ENCODE measurements at regions of chr4 and their contacts with region 1.

Region 1: GRCh38 chr4:37793562-37793961 is 32.9 kb upstream of the PGM2 start:
- DNase-seq: no peak
- ATAC-seq: peak; percentile 76

Region 2: DNA sequence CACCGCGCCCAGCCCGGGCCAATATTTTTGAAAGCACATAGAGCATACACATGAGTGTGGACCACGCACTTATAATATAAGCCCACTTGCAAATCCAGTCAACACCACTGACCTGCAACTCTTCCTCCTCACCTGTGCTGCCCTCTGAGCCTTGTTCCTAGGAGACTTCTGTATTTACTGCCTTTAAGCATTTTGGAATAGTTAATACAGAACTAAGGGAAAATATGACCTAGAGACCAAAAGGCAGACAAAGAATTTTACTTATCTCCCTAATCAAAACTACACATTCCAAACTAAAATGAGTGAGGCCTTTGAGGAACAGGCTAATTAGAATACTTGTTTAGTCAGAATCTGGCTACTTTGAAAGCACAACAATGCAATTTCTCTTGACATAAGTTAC is 196.5 kb before region 1 on chr4:
- intact Hi-C with region 1: loop called in 1 of 2 experiments (anchors 5 kb)
- DNase-seq: no peak
- ATAC-seq: no peak

Region 3: GRCh38 chr4:37609626-37610025 is 183.9 kb before region 1 on chr4:
- intact Hi-C with region 1: loop called in 1 of 2 experiments (anchors 5 kb)
- DNase-seq: no peak
- ATAC-seq: no peak

Region 4: DNA sequence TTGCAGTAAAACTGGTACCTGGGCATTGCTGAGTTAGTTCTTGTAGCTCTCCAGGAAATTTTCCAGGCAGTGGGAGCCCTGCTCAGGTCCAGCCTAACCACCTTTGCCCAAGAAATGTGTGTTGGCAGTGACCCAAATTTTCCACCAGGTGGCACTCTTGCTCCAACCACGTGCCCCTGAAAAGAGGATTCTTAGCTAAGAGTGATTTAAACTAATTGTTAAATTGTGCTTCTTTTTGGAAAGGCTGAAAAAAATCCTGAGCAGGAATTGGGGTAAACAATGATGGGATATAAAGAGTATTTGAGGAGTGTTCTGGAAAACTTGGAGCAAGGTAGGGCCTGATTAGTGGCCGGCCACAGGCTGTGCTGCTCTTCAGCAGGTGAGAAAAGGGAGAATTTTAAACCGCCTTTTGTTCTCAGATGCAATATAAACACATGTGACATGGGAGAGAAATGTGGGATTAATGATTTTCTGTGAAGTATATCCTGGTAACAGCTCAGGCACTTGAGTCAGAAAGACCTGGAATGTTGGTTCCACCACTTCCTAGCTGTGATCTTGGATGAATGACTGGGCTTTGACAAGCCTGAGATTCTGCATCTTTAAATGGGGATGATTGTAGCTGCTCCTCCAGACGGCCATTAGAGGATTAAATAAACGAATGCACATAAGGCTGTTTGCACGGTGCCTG is 386.3 kb after region 1 on chr4:
- intact Hi-C with region 1: no loop called
- DNase-seq: peak; percentile 73 to 79
- ATAC-seq: peak; percentile 82